ENCODE measurements at regions of chr1 and their contacts with region 1.

Region 1: GRCh38 chr1:101288491-101288944 is 51.7 kb downstream of the S1PR1 start:
- DNase-seq: peak; percentile 66 to 69
- H3K4me3 ChIP-seq: no peak overlapping the region
- H3K27ac ChIP-seq: no peak overlapping the region
- H3K4me1 ChIP-seq: no peaks in the 10 kb centered on the region
- H3K27me3 ChIP-seq: no peaks in the 10 kb centered on the region
- CTCF ChIP-seq: peak; percentile 75 to 90

Region 2: DNA sequence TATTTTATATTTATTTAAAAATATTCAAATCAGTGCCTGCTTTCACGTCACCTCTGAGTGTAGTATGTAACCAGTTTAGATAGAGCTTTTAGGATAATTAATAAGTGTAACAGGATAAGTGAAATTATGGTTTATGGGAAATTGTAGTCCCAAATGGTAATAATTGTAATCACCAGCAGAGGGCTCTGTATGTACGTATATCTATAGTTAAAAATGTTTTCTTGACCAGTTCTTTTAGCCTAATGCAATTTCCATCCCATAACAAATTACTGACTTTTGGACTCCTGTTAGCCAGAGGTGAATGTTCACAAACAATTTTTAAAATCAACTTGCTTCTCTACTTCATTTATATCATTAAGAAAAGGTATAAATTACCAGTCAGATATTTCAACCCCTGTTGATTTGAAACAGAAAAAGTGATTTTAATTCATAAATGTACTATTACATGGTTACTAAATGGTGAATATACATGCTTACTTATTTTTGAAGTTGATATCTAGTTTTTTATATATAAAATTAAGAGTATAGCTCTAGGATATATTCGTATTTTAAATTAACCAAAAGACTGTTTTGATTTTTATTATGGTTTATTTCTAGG is 367.3 kb before region 1 on chr1:
- intact Hi-C with region 1: loop called (anchors 5 kb)
- DNase-seq: no peak
- H3K4me3 ChIP-seq: no peak overlapping the region
- H3K27ac ChIP-seq: no peak overlapping the region
- H3K4me1 ChIP-seq: no peaks in the 10 kb centered on the region
- H3K27me3 ChIP-seq: no peaks in the 10 kb centered on the region
- CTCF ChIP-seq: peak; percentile 63 to 72